ENCODE measurements at regions of chr6 and their contacts with region 1.

Region 1: GRCh38 chr6:2505624-2506023 is 245.1 kb downstream of the MYLK4 start:
- DNase-seq: no peak
- ATAC-seq: no peak
- H3K4me3 ChIP-seq: no peak overlapping the region
- H3K27ac ChIP-seq: no peak overlapping the region
- H3K4me1 ChIP-seq: peaks cover 0 to 27% (median 0%) of the 10 kb centered on the region in 9 donors
- H3K27me3 ChIP-seq: peaks cover 0 to 37% (median 16%) of the 10 kb centered on the region in 7 donors
- CTCF ChIP-seq: peak in 5 of 9 donors; percentile 5 to 35 (median 26)

Region 2: GRCh38 chr6:2531426-2532215 is 26.0 kb after region 1 on chr6:
- intact Hi-C with region 1: loop called in 1 of 10 experiments (anchors 1 kb)
- DNase-seq: no peak
- ATAC-seq: no peak
- H3K4me3 ChIP-seq: no peak overlapping the region
- H3K27ac ChIP-seq: no peak overlapping the region
- H3K4me1 ChIP-seq: peaks cover 0 to 31% (median 0%) of the 10 kb centered on the region in 9 donors
- H3K27me3 ChIP-seq: peaks cover 0 to 8% (median 0%) of the 10 kb centered on the region in 7 donors
- CTCF ChIP-seq: no peak

Measured in heart right ventricle (tissue), 16 donors.